ENCODE measurements at regions of chr2 and their contacts with region 1.

Region 1: DNA sequence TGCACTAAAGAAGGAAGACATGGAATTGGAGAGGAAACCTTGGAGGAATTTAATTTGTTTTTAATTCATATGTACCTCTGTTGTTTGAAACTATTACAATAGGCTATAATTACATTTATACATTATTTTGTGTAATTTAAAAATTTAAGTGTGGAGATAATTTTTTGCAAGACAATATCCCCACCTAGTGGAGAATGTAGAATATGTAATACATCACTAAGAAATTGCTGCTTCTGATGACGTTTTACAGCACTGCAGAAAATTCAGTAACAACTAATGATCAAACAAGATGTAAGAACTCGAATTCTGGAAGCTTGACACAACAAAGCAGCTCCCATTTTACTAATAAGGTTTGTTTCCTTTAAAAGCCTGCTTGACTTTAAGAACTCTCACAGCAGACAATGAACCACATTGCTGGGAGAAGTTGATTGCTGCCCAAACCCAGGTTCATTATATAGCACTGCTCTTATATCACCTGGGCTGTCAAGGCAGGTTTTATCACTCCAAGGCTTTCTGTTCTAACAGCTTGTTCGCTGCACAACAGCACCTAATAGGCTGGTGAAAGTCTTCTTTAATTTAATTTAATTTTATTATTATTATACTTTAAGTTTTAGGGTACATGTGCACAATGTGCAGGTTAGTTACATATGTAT is 53.4 kb downstream of the THADA start:
- DNase-seq: no peak
- ATAC-seq: peak; percentile 40
- H3K4me3 Mint-ChIP-seq: no peak overlapping the region
- H3K27ac Mint-ChIP-seq: no peak overlapping the region
- H3K4me1 Mint-ChIP-seq: peaks cover 18% of the 10 kb centered on the region
- H3K27me3 Mint-ChIP-seq: no peaks in the 10 kb centered on the region
- CTCF ChIP-seq: no peak

Region 2: DNA sequence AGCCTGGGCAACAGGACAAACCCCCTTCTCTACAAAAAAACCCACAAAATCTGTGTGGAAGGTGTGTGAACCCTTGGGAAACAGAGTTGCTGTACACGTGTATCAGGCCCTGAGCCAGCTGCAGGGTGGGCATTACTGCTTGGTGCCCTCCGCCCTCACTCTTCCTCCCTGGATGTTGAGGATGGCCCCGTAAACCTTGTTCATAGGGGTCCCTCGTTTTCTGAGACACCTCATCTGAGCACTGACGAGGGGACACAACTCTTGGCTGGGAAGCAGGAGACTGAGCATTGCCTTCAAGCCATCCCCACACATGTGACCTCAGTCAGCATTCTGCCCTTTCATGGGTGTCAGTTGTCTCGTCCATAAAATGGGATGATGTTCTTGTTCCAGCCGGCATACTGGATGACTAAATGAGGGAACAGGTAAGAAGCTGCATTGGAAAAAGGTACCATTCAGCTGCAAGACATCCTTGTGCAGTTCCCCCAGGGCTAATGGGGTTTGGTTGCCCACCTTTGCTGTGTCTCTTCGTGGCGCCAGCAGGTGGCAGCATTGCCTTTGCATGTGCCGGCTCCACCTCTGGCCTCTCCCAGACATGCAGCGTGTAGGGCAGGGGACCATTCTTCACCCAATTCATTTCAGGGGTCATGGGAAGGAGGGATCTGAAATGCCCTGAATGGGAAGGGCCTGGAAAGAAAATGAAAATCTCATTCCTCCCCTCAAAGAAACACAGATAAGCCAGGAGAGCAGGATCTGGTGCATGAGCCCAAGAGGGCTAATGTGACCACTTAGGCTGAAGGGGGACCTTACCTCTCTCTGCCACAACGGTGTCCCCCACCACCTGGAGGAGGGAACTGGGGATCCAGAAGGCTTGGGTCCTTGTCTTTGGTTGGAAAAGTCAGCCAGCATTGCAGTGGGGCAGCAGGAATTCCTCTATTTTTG is 713.7 kb before region 1 on chr2:
- CTCF ChIA-PET with region 1: interaction called, 7 read pairs
- POLR2A ChIA-PET with region 1: no interaction called
- intact Hi-C with region 1: loop called (anchors 1 kb)
- DNase-seq: peak; percentile 52
- ATAC-seq: peak; percentile 88
- H3K4me3 Mint-ChIP-seq: no peak overlapping the region
- H3K27ac Mint-ChIP-seq: no peak overlapping the region
- H3K4me1 Mint-ChIP-seq: peaks cover 14% of the 10 kb centered on the region
- H3K27me3 Mint-ChIP-seq: no peaks in the 10 kb centered on the region
- CTCF ChIP-seq: peak; percentile 65

Region 3: GRCh38 chr2:42859006-42859552 is 683.3 kb before region 1 on chr2:
- CTCF ChIA-PET with region 1: interaction called, 7 read pairs
- POLR2A ChIA-PET with region 1: no interaction called
- intact Hi-C with region 1: loop called (anchors 1 kb)
- DNase-seq: no peak
- ATAC-seq: no peak
- H3K4me3 Mint-ChIP-seq: no peak overlapping the region
- H3K27ac Mint-ChIP-seq: no peak overlapping the region
- H3K4me1 Mint-ChIP-seq: no peaks in the 10 kb centered on the region
- H3K27me3 Mint-ChIP-seq: no peaks in the 10 kb centered on the region
- CTCF ChIP-seq: peak; percentile 42

Region 4: GRCh38 chr2:42944779-42945415 is 597.5 kb before region 1 on chr2:
- CTCF ChIA-PET with region 1: interaction called, 32 read pairs
- POLR2A ChIA-PET with region 1: no interaction called
- intact Hi-C with region 1: loop called (anchors 1 kb)
- DNase-seq: no peak
- ATAC-seq: no peak
- H3K4me3 Mint-ChIP-seq: no peak overlapping the region
- H3K27ac Mint-ChIP-seq: no peak overlapping the region
- H3K4me1 Mint-ChIP-seq: peaks cover 32% of the 10 kb centered on the region
- H3K27me3 Mint-ChIP-seq: no peaks in the 10 kb centered on the region
- CTCF ChIP-seq: no peak

Region 5: GRCh38 chr2:42974721-42975717 is 567.4 kb before region 1 on chr2:
- CTCF ChIA-PET with region 1: interaction called, 10 read pairs
- POLR2A ChIA-PET with region 1: no interaction called
- intact Hi-C with region 1: no loop called
- DNase-seq: peak; percentile 54
- ATAC-seq: peak; percentile 76
- H3K4me3 Mint-ChIP-seq: no peak overlapping the region
- H3K27ac Mint-ChIP-seq: no peak overlapping the region
- H3K4me1 Mint-ChIP-seq: peaks cover 35% of the 10 kb centered on the region
- H3K27me3 Mint-ChIP-seq: peaks cover 3% of the 10 kb centered on the region
- CTCF ChIP-seq: no peak

Region 6: DNA sequence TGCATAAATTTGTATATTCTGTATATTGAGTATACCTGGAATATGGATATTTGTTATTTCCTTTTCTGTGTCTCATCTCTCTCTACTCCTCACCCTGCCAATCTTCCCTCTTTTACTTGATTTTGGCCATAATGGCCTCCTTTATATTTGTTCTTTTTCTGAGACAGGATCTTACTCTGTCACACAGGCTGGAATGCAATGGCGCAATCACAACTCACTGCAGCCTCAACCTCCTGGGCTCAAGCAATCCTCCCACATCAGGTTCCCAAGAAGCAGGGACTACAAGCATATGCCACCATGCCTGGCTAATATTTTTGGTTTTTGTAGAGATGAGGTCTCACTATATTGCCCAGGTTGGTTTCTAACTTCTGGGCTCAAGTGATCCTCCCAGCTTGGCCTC is 788.4 kb after region 1 on chr2:
- CTCF ChIA-PET with region 1: no interaction called
- POLR2A ChIA-PET with region 1: no interaction called
- intact Hi-C with region 1: no loop called
- DNase-seq: no peak
- ATAC-seq: no peak
- H3K4me3 Mint-ChIP-seq: no peak overlapping the region
- H3K27ac Mint-ChIP-seq: no peak overlapping the region
- H3K4me1 Mint-ChIP-seq: no peaks in the 10 kb centered on the region
- H3K27me3 Mint-ChIP-seq: no peaks in the 10 kb centered on the region
- CTCF ChIP-seq: no peak